Posterior vena cava (tissue), 2 donors: ENCODE measurements at regions of chr10 and their contacts with region 1.

Region 1: GRCh38 chr10:72126184-72126871 is 38.0 kb upstream of the SPOCK2 start:
- DNase-seq: no peak

Region 2: DNA sequence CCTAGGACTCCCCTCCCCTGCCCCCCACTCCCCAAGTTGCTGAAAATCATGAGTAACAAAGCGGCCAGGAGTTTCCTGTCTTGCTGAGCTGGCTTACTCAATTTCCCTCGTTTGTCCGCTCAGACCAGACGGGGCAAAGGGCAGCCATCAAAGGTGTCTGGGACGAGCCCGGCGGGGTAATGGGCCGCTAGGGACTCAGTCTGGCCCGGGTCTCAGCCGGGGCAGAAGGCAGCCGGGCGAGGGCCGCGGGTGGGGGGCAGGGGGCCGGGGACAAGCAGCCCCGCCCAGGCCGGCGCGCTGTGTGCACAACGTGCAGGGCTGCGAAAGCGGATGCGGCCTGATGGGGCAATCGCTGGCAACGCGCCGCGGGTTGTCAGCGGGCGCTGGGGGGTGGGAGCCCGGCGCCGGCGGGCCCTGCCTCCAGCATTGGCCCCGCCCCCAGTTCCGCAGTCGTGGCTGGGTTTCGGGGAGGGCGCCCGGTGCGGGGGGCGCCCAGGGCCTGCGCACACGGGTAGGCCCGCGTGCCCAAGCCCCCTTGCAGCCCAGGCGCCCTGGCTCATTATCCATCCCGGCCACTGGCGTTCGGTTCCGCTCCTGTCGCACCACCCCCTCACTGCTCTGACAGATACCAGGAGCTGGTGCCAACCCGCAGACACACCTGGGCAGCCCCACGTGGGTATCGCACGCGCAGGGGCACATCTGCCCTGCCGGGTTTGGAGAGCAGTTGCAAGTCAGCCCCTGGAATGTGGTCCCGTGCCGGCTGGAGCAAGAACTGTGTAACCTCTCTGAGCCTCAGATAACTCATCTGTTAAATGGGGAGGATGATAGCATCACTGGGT is 193.3 kb after region 1 on chr10:
- intact Hi-C with region 1: loop called in 1 of 2 experiments (anchors 10 kb)
- DNase-seq: peak; percentile 99

Region 3: DNA sequence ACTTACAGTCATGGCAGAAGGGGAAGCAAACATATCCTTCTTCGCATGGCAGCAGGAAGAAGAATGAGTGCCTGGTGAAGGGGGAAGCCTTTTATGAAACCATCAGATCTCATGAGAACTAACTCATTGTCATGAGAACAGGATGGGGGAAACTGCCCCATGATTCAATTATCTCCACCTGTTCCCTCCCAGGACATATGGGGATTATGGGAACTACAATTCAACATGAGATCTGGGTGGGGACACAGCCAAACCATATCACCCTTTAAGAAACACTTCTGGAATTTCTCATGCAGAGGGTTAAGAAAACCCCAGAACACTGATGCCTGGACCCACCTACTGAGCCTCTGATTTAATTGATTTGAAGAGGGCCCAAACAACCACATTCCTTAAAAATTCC is 291.6 kb after region 1 on chr10:
- intact Hi-C with region 1: no loop called
- DNase-seq: no peak